ENCODE measurements at regions of chr6 and their contacts with region 1.

Region 1: DNA sequence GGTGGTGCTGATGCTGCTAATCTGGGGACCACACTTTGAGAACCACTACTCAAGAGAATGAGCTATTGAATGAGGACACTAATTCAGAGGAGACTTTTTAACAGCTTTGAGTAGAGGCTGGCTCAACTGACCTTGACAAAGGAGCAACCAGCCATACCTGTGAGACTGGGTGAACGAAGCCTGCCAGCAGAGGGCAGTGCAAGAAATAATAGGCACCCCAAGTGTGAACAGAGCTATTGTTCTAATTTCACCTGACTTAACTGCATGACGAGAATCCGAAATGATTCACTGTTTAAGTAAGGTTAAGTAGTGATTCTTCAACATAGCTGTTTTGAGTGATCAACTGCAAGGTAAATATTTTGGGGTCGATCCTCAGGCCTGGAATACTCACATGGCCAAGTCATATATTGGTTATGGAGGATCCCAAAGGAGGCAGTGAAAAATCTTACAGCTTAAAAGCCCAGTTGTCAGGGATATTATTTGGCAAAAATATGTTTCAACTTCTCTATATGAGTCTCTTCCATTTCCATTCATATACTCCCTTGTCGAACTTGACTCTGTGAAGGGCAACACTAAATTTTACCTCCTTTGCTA is 550.5 kb upstream of the MARCKS start:
- DNase-seq: peak; percentile 62
- H3K4me3 ChIP-seq: no peak overlapping the region
- H3K27ac ChIP-seq: no peak overlapping the region
- H3K4me1 ChIP-seq: no peaks in the 10 kb centered on the region
- H3K27me3 ChIP-seq: no peaks in the 10 kb centered on the region
- CTCF ChIP-seq: peak; percentile 47 to 68

Region 2: GRCh38 chr6:113122060-113122459 is 184.6 kb before region 1 on chr6:
- CTCF ChIA-PET with region 1: no interaction called
- dilution Hi-C with region 1: no loop called
- in situ Hi-C with region 1: no loop called
- intact Hi-C with region 1: loop called (anchors 1 kb)
- DNase-seq: peak; percentile 77
- H3K4me3 ChIP-seq: no peak overlapping the region
- H3K27ac ChIP-seq: no peak overlapping the region
- H3K4me1 ChIP-seq: peaks cover 24% of the 10 kb centered on the region
- H3K27me3 ChIP-seq: no peaks in the 10 kb centered on the region
- CTCF ChIP-seq: peak; percentile 43 to 54

Region 3: GRCh38 chr6:113488812-113489685 is 182.4 kb after region 1 on chr6:
- CTCF ChIA-PET with region 1: interaction called, 5 read pairs
- dilution Hi-C with region 1: no loop called
- in situ Hi-C with region 1: no loop called
- intact Hi-C with region 1: loop called (anchors 1 kb)
- DNase-seq: no peak
- H3K4me3 ChIP-seq: no peak overlapping the region
- H3K27ac ChIP-seq: no peak overlapping the region
- H3K4me1 ChIP-seq: peaks cover 1% of the 10 kb centered on the region
- H3K27me3 ChIP-seq: no peaks in the 10 kb centered on the region
- CTCF ChIP-seq: peak; percentile 15 to 42

Region 4: DNA sequence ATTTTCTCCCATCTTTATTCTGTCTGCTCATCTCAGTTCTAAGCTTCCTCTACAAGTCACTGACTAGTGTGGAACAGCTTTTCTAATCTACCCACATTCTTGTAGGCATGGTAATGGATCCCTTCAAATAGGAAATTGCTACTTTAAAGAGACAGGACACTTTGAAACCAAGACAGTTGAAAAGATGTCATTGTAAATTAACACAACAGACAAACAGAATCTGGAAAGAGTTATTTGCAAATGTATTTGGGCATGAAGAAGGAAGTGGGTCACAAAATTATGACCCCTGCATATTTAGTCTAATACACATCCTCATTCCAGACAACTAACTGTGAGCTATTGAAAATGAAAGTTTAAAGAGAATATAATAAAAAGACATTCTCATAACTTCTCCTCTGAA is 252.3 kb after region 1 on chr6:
- CTCF ChIA-PET with region 1: no interaction called
- dilution Hi-C with region 1: no loop called
- in situ Hi-C with region 1: no loop called
- intact Hi-C with region 1: loop called (anchors 5 kb)
- DNase-seq: peak; percentile 21
- H3K4me3 ChIP-seq: no peak overlapping the region
- H3K27ac ChIP-seq: no peak overlapping the region
- H3K4me1 ChIP-seq: peaks cover 24% of the 10 kb centered on the region
- H3K27me3 ChIP-seq: no peaks in the 10 kb centered on the region
- CTCF ChIP-seq: no peak

Region 5: GRCh38 chr6:113570641-113571040 is 264.0 kb after region 1 on chr6:
- CTCF ChIA-PET with region 1: no interaction called
- dilution Hi-C with region 1: no loop called
- in situ Hi-C with region 1: no loop called
- intact Hi-C with region 1: loop called (anchors 5 kb)
- DNase-seq: no peak
- H3K4me3 ChIP-seq: no peak overlapping the region
- H3K27ac ChIP-seq: no peak overlapping the region
- H3K4me1 ChIP-seq: no peaks in the 10 kb centered on the region
- H3K27me3 ChIP-seq: no peaks in the 10 kb centered on the region
- CTCF ChIP-seq: peak; percentile 11 to 41

Region 6: GRCh38 chr6:113879186-113880096 is 572.8 kb after region 1 on chr6:
- CTCF ChIA-PET with region 1: interaction called, 7 read pairs
- dilution Hi-C with region 1: no loop called
- in situ Hi-C with region 1: loop called in 1 of 2 experiments (anchors 10 kb)
- intact Hi-C with region 1: loop called (anchors 1 kb)
- DNase-seq: peak; percentile 64
- H3K4me3 ChIP-seq: no peak overlapping the region
- H3K27ac ChIP-seq: no peak overlapping the region
- H3K4me1 ChIP-seq: peaks cover 6% of the 10 kb centered on the region
- H3K27me3 ChIP-seq: no peaks in the 10 kb centered on the region
- CTCF ChIP-seq: peak; percentile 71 to 87

Region 7: DNA sequence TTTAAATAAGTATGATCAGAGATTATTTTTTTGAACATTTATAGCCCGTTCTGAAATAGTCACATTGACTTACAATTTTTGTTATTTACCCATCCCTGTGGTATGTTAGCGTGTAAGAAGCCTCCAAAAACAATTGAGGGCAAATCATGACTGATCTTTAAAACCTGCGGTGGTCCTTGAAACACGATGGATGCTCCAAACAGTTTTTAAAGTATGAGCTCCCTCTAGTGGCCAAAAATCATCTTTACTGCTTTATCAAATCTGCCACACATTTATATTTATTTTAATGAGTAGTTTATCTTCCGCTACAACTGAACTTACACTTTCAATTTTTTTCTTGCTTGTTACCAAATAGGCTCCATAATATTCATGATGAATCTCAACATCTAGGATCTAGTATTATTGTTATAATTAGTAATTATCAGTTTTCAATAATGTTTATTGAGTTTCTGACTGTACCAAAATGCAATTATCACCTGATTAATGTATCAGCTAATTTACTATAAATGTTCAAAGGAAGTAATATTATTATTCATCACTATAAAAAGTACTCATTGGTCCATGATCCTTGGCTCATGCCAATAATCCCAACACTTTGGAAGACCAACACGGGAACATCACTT is 602.7 kb after region 1 on chr6:
- CTCF ChIA-PET with region 1: no interaction called
- dilution Hi-C with region 1: no loop called
- in situ Hi-C with region 1: no loop called
- intact Hi-C with region 1: loop called (anchors 1 kb)
- DNase-seq: peak; percentile 11
- H3K4me3 ChIP-seq: no peak overlapping the region
- H3K27ac ChIP-seq: no peak overlapping the region
- H3K4me1 ChIP-seq: no peaks in the 10 kb centered on the region
- H3K27me3 ChIP-seq: no peaks in the 10 kb centered on the region
- CTCF ChIP-seq: peak; percentile 58 to 64

Measured in mammary epithelial cell (primary cell).